Right ventricle myocardium inferior (tissue), 1 donor: ENCODE measurements at regions of chr20 and their contacts with region 1.

Region 1: DNA sequence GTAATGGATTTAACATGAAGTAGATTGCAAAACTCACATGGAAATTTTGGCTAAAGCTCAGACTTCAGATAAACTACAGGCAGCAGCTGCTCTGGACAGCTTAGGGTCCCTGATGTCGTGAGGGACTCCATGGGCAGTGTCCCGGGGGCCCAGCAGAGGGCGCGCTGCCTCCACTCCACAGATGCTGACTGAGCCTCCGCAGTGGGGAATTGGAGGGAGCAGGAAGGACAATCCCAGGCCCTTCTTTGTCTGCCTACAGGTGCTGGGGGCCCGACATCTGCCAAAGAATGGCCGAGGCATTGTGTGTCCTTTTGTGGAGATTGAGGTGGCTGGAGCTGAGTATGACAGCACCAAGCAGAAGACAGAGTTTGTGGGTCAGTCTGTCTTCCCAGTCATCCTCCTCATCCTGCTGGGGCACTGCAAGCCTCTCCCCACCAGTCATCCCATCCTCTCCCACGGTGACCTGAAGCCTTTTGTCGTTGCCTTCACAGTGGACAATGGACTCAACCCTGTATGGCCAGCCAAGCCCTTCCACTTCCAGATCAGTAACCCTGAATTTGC is 35.9 kb downstream of the PLCG1 start:
- DNase-seq: peak; percentile 92
- ATAC-seq: peak; percentile 86

Region 2: GRCh38 chr20:41125530-41126457 is 47.4 kb before region 1 on chr20:
- intact Hi-C with region 1: no loop called
- DNase-seq: no peak
- ATAC-seq: no peak

Region 3: DNA sequence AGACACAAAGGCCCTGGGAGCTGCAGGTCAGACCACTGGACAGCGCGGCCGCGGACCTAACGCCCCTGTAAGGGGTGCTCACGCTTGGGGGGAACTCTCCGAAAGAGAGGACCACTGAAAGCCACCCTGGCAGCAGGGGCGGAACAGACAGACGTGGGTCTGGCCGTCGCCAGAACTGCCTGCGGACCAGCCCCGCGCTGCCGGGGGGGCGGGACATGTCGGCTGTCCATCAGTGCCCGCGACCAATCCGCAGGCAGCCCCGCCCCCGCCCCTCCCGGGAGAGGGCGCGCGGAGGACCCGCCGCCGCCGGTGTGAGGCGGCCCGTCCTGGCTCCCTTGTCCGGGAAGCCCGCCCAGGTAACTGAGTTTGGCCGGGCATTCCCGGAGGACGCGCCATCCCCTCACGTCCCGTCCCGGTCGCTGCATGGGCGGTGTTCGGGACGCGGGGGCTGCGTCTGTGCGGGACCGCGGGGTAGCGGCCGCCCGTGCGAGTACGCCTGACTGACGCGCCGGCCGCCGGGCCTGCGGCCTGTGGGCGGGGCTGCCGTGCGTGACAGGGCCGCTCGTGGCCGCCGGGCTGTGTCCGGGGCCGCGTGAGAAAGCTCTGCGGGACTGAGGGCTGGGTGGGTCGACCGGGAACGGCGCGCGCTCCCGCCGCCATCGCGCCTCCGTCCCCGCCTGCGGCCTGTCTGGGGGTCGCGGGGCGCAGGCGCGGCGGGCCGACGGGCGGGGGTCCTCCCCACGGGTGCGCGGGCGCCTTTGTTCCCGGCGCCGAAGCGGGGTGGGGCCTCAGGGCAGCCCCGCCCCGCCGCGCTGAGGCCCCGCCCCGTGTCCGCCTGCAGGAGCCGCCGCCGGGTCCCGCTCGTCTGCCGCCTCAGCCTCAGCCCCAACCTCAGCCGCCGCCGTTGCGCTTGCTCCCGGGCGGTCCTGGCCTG is 36.3 kb before region 1 on chr20 and contains the start of gene PLCG1:
- intact Hi-C with region 1: loop called (anchors 2 kb)
- DNase-seq: peak; percentile 94
- ATAC-seq: peak; percentile 92
- total RNA-seq, gene PLCG1: 43.4 TPM

Region 4: DNA sequence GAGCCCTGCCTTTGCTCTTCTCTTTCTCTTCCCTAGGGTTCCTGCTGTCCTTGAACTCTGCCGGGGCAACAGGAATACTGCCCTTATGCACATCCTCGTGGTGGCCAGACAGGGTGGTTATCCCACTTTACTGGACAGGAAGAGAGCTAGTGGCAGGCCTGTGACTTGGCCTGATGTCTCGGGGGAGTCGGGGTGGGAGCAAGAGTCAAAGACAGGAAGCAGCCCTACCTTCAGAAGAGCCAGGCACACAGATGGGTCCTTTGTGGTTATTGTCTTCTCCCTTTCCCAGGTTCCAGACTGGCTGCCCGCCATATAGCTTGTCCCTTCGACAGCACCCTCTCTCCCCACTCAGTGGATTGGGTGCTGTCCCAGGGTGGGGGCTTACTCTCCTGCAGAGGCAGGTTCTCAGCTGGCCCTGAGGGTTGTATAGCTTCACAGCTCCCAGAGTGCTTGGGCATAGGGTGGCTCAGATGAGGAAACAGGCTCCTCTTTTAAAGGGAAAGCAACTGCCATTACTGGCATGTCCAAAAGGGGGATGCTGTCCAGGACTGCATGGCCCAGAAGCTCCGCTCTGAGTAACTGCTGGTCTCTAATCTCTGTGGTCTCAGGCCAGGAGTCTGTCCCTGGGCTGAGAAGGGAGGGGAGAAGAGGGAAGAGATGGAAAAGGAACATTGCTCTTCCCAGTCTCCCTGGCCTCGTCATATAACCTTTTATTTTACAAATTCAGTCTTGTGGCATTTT is 18.6 kb before region 1 on chr20:
- intact Hi-C with region 1: loop called (anchors 2 kb)
- DNase-seq: no peak
- ATAC-seq: peak; percentile 81

Region 5: DNA sequence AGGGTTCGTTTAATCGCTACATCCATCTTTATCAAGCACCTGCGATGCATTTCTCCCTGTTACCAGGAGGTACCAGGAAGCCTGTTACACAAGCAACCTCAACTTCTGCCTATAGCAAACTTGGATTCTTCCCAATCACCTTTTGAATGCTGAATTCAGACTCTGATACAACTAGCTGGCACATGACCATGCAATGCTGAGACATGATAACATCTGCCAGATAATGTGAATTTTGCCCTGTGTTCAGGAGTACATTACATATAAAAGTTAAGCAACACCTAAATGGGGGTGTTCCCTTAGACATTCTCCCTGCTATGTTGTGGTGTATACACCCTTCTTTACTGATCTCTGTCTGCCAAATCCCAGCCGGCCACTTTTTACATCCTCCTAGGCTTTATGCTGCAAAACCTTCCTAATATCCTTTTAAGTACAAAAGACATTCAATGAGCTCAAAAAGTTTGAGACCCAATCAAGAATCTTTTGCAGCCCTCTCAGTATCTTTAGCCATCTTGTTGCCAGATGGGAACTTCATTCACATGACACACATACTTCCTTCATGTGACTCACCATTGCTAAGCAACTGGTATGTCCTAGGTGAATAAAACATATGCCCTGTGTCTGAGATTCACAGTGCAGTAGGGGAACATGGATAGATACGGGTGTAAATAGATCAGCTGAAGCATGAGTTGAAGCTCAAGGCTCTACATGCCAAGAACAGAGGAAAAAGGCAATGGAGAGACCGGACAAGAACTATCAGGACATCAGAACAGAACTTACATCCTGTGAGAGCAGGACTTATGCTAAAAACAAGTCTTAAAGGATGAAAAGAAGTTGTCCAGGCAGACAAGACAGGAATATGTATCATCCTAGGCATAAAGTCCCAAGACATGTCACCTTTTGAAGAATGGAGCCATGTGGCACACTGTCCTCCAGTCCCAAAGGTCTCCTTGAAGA is 60.0 kb after region 1 on chr20:
- intact Hi-C with region 1: loop called (anchors 1 kb)
- DNase-seq: no peak
- ATAC-seq: peak; percentile 30

Region 6: DNA sequence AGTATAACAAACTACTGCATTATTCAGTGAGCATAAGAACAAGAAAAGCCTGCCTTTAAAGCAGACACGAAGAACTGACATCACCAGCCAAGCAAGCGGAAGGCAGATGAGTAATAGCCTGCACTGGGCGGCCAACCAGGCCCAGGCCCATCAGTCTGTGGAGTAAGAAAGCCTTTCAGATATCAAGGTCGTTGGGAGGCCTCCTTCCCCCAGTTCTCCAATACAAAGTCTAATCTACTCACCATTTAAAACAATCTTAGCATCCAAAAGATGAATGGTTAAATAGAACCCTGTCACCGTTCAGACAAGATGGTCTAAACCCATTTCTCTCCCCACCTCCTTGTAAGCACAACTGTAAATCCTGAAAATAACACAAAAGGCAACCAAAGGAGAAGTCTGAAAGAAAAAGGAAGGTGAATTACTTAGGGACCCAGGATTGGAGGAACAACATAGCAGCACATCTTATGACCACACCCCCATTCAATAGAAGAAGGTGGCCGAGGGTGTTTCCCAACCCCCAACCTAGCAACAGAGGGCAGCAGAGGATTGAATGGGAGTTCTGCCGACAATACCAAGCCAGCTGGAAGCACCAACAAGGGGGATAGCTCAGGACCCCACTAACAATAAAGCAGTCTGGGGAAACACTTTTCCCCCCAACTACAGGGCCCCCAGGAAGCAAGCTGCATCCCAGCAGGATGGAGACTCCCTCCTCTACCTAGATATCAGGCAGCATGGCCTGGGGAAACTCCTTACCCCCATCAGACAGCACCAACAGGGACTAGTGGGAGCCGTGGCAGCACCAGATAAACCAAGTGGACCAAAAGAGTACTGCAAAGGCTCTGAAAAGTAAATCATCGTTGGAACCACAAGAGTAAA is 76.4 kb after region 1 on chr20:
- intact Hi-C with region 1: loop called (anchors 5 kb)
- DNase-seq: peak; percentile 75
- ATAC-seq: peak; percentile 86

Region 7: GRCh38 chr20:41293269-41294037 is 120.2 kb after region 1 on chr20:
- intact Hi-C with region 1: no loop called
- DNase-seq: no peak
- ATAC-seq: no peak

Region 8: GRCh38 chr20:41317536-41318270 is 144.5 kb after region 1 on chr20 and contains the start of gene ZHX3:
- intact Hi-C with region 1: loop called (anchors 5 kb)
- DNase-seq: peak; percentile 96
- ATAC-seq: peak; percentile 99
- total RNA-seq, gene ZHX3: 34.5 TPM

Region 9: DNA sequence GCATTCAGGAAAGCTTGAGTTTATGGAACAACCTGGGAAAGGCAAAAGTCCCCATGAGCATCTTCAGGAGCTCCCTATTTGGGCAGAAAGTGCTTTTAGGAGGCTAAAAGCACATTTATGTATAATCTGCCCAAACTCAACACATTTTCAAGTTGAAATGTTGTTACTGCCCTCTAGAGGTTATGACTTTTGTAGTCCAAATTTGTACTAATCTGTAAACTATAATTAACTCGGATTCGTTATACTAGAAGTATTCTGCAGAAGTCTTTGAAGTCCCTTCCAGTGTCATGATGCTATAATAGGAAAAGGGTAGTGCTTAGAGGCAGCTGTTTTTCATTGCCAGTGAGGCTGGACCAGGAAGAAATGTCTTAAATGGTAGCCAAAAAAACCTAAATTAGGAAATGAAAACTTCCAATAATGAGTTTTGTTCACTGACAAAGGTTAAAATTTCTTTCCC is 238.2 kb after region 1 on chr20:
- intact Hi-C with region 1: loop called (anchors 5 kb)
- DNase-seq: no peak
- ATAC-seq: peak; percentile 68